ENCODE measurements at regions of chr3 and their contacts with region 1.

Region 1: GRCh38 chr3:99842826-99843589 is 25.3 kb downstream of the CMSS1 start:
- DNase-seq: peak; percentile 74
- H3K4me3 ChIP-seq: no peak overlapping the region
- H3K27ac ChIP-seq: no peak overlapping the region
- H3K4me1 ChIP-seq: peaks cover 14% of the 10 kb centered on the region
- H3K27me3 ChIP-seq: no peaks in the 10 kb centered on the region
- CTCF ChIP-seq: peak; percentile 40 to 53
- POLR2A ChIP-seq: no peak

Region 2: DNA sequence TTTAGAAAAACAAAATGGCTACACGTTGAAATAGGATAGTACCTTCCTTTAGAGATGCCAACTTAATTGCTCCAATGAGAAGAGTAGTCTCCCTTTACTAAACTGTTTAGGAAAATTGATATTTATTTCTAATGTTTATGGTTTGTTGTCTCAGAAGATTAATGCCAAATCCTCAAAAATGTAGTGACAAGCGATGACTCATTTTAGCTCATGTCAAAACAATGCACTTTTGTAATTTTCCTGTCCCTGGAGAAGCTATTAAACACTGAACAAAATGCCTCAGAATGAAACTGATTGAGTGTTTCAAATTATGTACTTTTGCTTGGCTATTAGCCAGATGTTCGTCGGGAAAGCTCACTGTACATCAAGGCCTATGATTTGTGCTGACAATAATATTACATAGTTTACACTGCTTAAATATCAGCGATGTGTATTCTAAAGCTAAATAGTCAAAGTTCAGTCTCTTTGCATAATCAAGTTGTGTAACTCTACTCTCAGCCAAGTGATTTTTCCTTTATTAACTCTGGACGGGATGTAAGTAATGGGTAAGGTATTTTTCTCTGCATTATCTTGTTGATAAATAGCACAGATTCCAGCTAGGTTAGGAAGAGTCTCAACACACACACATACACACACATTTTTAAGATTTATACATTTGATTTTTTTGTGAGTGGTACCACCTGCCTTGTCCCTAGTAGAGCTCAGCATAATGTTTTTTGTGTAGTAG is 58.4 kb after region 1 on chr3:
- CTCF ChIA-PET with region 1: interaction called, 16 read pairs
- POLR2A ChIA-PET with region 1: no interaction called
- dilution Hi-C with region 1: no loop called
- intact Hi-C with region 1: no loop called
- DNase-seq: peak; percentile 92
- H3K4me3 ChIP-seq: peak overlapping the region in 1 of 3 experiments; percentile 24
- H3K27ac ChIP-seq: peak overlapping the region; percentile 94
- H3K4me1 ChIP-seq: peaks cover 34% of the 10 kb centered on the region
- H3K27me3 ChIP-seq: no peaks in the 10 kb centered on the region
- CTCF ChIP-seq: no peak
- POLR2A ChIP-seq: no peak

Region 3: DNA sequence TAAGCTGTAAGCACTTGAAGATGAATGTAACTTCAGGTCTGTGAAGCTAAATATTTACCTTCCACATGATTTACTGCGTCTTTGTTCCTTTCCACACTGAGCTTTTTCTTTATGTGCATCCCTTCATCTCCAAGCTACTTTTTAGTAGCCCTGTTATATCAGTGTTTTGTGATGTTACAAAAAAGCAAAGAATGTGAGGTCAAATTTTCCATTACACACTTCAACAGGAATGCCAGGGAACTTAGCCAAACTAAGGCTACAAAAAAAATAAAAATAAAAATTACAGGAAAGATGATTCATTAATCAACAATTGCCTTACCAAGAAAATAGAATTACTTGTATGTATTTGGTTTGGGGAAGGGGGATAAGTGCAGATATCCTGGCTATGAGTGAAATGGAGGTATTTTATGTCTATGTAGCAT is 198.3 kb after region 1 on chr3:
- CTCF ChIA-PET with region 1: interaction called, 35 read pairs
- POLR2A ChIA-PET with region 1: no interaction called
- dilution Hi-C with region 1: no loop called
- intact Hi-C with region 1: loop called (anchors 2 kb)
- DNase-seq: peak; percentile 99
- H3K4me3 ChIP-seq: peak overlapping the region in 1 of 3 experiments; percentile 29
- H3K27ac ChIP-seq: peak overlapping the region; percentile 100
- H3K4me1 ChIP-seq: peaks cover 46% of the 10 kb centered on the region
- H3K27me3 ChIP-seq: no peaks in the 10 kb centered on the region
- CTCF ChIP-seq: no peak
- POLR2A ChIP-seq: no peak

Region 4: GRCh38 chr3:100068826-100069225 is 225.8 kb after region 1 on chr3:
- CTCF ChIA-PET with region 1: interaction called, 39 read pairs
- POLR2A ChIA-PET with region 1: no interaction called
- dilution Hi-C with region 1: no loop called
- intact Hi-C with region 1: loop called (anchors 1 kb)
- DNase-seq: peak; percentile 85
- H3K4me3 ChIP-seq: no peak overlapping the region
- H3K27ac ChIP-seq: peak overlapping the region; percentile 54
- H3K4me1 ChIP-seq: peaks cover 16% of the 10 kb centered on the region
- H3K27me3 ChIP-seq: no peaks in the 10 kb centered on the region
- CTCF ChIP-seq: peak; percentile 71 to 75
- POLR2A ChIP-seq: no peak

Region 5: GRCh38 chr3:100175637-100176280 is 332.8 kb after region 1 on chr3:
- CTCF ChIA-PET with region 1: interaction called, 12 read pairs
- POLR2A ChIA-PET with region 1: no interaction called
- dilution Hi-C with region 1: no loop called
- intact Hi-C with region 1: no loop called
- DNase-seq: no peak
- H3K4me3 ChIP-seq: no peak overlapping the region
- H3K27ac ChIP-seq: no peak overlapping the region
- H3K4me1 ChIP-seq: peaks cover 4% of the 10 kb centered on the region
- H3K27me3 ChIP-seq: no peaks in the 10 kb centered on the region
- CTCF ChIP-seq: no peak
- POLR2A ChIP-seq: no peak